ENCODE measurements at regions of chr18 and their contacts with region 1.

Region 1: DNA sequence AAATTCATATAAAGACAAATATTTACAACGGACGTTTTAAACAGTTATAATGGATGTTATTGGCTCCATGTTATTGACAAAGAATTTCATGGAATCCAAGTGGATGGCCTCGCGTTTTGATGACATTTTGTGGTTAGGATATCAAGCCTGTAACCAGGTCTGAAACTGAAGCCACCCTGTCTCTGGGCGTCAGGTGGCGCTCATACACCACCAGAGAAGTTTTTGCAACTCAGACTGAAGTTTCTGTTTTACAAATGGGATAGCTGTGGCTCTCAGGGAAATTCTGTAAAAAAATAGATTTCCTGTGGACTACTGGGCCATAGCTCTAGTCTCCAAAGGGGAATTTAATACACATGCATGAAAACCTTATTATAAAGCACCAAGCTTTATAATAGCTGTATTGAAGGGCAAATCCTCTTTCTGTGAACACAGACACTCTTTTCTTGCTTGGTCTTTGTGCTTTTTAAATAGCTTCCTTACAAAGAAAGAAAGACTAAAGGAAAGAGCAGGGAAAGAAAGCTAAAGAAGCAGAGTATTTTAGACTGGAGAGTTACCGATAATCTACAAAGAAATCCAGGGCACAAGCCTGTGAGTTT is 86.7 kb downstream of the C18orf54 start:
- DNase-seq: peak; percentile 67
- H3K4me3 Mint-ChIP-seq: no peak overlapping the region
- H3K27ac Mint-ChIP-seq: no peak overlapping the region
- H3K4me1 Mint-ChIP-seq: no peaks in the 10 kb centered on the region
- H3K27me3 Mint-ChIP-seq: peaks cover 21% of the 10 kb centered on the region

Region 2: GRCh38 chr18:54647176-54647575 is 202.8 kb after region 1 on chr18:
- CTCF ChIA-PET with region 1: interaction called, 4 read pairs
- intact Hi-C with region 1: loop called (anchors 1 kb)
- DNase-seq: peak; percentile 27
- H3K4me3 Mint-ChIP-seq: no peak overlapping the region
- H3K27ac Mint-ChIP-seq: no peak overlapping the region
- H3K4me1 Mint-ChIP-seq: no peaks in the 10 kb centered on the region
- H3K27me3 Mint-ChIP-seq: peaks cover 10% of the 10 kb centered on the region

Region 3: DNA sequence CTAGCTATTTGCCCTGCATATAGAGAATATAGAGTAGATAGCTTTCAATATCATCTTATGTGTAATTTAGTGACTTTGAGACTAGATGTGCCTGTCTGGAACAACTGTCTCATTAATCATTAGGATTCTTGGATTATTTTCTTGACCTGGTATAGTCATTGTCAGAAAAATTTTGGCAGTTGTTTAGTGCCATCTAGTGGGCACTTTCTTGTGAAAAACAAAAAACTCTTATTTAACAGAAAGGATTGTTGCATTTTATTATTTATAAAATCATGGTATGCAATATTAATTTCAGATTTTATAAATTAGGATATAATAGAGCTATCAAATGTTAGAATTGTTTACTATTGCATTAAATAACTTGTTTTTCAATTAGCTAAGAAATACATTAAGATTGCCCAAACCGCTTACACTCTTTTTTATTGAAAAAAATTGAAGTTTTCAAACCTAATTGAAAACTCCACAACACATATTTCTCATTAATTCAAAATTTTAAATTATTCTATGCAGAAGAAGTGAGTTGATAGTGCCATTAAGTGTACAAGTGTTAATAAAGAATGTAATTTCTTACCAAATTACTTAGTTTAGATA is 227.0 kb after region 1 on chr18:
- CTCF ChIA-PET with region 1: interaction called, 28 read pairs
- intact Hi-C with region 1: loop called (anchors 1 kb)
- DNase-seq: no peak
- H3K4me3 Mint-ChIP-seq: no peak overlapping the region
- H3K27ac Mint-ChIP-seq: no peak overlapping the region
- H3K4me1 Mint-ChIP-seq: no peaks in the 10 kb centered on the region
- H3K27me3 Mint-ChIP-seq: peaks cover 7% of the 10 kb centered on the region

Region 4: GRCh38 chr18:54776282-54776977 is 332.0 kb after region 1 on chr18:
- CTCF ChIA-PET with region 1: no interaction called
- intact Hi-C with region 1: no loop called
- DNase-seq: peak; percentile 56
- H3K4me3 Mint-ChIP-seq: no peak overlapping the region
- H3K27ac Mint-ChIP-seq: no peak overlapping the region
- H3K4me1 Mint-ChIP-seq: peaks cover 3% of the 10 kb centered on the region
- H3K27me3 Mint-ChIP-seq: peaks cover 2% of the 10 kb centered on the region

Region 5: DNA sequence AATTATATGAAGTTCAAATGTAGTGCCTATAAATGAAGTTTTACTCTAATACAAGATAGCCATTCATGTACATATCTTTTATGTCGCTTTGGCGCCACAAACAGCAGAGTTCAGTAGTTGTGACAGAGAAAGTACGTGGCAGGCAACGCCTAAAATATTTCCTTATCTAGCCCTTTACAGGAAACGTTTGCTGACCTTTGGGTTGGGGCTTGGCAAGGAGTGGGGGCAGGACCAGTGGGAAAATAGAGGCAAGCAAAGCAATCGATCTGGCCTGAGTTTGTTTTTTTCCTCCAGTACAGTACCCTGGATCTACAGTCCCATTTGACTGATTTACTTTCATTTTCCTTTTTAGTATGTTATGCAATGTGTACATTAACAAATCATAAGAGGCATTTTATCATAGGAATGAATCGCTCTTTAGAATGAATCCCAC is 501.7 kb after region 1 on chr18:
- CTCF ChIA-PET with region 1: no interaction called
- intact Hi-C with region 1: loop called (anchors 1 kb)
- DNase-seq: peak; percentile 28
- H3K4me3 Mint-ChIP-seq: peak overlapping the region; percentile 82
- H3K27ac Mint-ChIP-seq: peak overlapping the region; percentile 73
- H3K4me1 Mint-ChIP-seq: peaks cover 14% of the 10 kb centered on the region
- H3K27me3 Mint-ChIP-seq: no peaks in the 10 kb centered on the region

Region 6: DNA sequence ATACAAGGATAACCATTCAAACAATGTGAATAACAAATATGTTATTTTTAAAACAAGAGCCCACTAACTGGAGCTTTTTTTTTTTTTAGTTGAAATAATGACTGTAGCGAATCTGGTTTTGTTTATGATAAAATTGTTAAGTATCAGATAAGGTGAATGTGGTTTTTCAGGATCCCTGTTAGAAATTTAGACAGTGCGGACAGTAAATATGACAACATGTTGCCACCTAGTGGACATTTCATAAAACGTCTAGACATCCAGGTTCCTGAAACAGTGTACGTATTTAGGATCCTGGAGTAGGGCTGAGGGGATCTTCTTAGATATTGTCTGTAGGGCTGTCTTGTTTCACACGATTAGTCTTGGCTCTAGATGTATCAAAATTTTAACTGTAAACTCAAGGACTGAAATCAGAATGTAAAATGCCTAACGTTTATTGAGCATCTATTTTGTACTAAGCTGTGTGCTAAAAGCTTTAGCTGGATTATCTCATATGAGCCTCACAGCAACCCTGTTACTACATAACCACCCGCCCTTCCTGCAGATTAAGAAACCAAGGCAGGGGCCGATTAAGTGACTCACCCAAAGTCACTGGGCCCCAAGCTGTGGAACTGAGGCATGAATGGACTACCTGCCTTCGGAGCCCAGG is 538.7 kb after region 1 on chr18:
- CTCF ChIA-PET with region 1: interaction called, 5 read pairs
- intact Hi-C with region 1: loop called (anchors 1 kb)
- DNase-seq: no peak
- H3K4me3 Mint-ChIP-seq: no peak overlapping the region
- H3K27ac Mint-ChIP-seq: no peak overlapping the region
- H3K4me1 Mint-ChIP-seq: no peaks in the 10 kb centered on the region
- H3K27me3 Mint-ChIP-seq: no peaks in the 10 kb centered on the region

Measured in activated naive CD4-positive, alpha-beta T cell treated with anti-CD3 and anti-CD28 coated beads for 36 hours (primary cell).